ENCODE measurements at regions of chr4 and their contacts with region 1.

Region 1: DNA sequence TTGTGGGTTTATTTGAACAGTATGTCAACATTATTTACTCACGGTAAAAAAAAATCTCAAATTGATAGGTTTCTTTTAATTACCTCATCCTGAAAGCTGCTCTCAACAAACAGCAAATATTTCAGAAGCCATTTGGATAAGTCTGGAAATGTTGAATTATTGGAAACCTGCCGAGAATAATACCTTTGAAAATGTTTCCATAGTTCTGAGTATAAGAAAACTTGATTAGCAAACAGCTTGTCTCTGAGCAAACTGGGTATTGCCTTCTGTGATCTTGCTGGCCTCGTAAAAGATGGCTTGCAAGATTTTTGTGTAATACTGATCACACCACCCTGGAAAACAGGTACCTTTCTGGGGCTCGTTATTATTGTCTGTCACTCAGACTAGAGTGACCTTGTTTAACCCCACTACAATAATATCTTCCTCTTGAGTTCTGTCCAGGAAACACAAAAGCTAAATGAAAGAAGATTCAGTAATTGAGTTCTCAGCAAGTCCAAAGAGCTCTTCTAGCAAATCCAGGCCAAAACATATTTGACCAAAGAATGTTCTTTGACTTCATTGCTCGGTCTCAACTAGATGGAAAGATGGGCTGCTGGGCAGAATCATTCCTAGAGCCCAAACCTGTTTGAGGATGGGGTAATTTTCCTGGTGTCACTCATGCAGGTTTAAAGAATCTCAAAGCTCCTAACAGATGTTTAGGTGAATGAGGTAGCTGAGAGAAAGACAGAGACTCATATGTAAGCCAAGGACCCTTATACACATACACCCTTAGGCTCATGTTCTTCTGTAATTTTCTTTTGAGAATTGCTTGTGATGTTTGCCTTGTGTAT is 255.6 kb upstream of the JADE1 start:
- DNase-seq: no peak
- ATAC-seq: peak; percentile 18; the same call in 2 of the 3 replicates
- H3K4me3 ChIP-seq: peak overlapping the region; percentile 39; the same call in 1 of the 2 replicates
- H3K27ac ChIP-seq: peak overlapping the region; percentile 85; the same call in 2 of the 3 replicates
- H3K4me1 ChIP-seq: peaks cover 6 to 12% of the 10 kb centered on the region in 2 experiments; a peak in 3 of 5 replicates
- H3K27me3 ChIP-seq: no peaks in the 10 kb centered on the region
- CTCF ChIP-seq: no peak
- EP300 ChIP-seq: no peak
- POLR2A ChIP-seq: no peak
- RAD21 ChIP-seq: no peak

Region 2: DNA sequence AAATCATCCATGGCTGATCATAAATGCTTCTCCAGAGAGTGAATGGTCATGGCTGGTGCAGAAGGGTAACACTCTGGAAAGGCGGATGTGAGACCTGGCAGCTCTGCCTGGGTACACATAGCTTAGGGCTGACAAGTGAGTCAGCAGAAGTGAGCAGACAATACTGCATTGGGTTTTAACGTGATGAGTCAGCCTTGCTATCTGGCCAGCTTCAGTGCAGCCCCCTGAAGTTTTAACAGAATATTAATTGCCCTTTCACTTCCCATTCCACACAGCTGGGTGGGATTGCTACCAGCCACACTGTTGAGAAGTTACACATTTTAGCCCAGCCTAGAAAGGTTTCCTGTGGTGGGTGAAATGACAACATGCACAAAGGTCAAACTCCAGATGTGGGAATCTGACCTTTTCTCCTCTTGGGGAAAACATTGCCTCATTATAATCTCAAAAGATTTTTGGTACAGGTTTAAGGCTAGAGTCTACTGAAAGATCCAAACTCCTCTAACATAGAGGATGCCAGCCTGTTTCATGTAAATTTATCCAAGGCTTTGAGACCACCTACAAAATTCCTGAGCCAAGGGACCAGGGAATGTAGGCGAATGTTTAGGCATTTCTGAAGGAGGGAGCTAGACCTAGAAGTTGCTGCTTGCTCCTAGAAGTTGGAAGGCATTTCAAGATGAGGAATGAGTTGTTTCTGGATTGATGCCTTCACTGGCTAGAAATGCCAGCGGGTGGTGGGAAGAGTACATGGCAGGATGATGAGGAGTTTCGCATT is 36.0 kb before region 1 on chr4:
- CTCF ChIA-PET with region 1: no interaction called
- POLR2A ChIA-PET with region 1: interaction called, 17 read pairs
- in situ Hi-C with region 1: no loop called
- intact Hi-C with region 1: loop called (anchors 1 kb)
- DNase-seq: peak; percentile 69 to 89 (median 78)
- ATAC-seq: peak; percentile 92
- H3K4me3 ChIP-seq: no peak overlapping the region
- H3K27ac ChIP-seq: peak overlapping the region; percentile 95
- H3K4me1 ChIP-seq: peaks cover 6 to 65% of the 10 kb centered on the region in 2 experiments
- H3K27me3 ChIP-seq: no peaks in the 10 kb centered on the region
- CTCF ChIP-seq: no peak
- EP300 ChIP-seq: peak; percentile 81
- POLR2A ChIP-seq: no peak
- RAD21 ChIP-seq: no peak; a peak in 2 of 4 replicates

Region 3: DNA sequence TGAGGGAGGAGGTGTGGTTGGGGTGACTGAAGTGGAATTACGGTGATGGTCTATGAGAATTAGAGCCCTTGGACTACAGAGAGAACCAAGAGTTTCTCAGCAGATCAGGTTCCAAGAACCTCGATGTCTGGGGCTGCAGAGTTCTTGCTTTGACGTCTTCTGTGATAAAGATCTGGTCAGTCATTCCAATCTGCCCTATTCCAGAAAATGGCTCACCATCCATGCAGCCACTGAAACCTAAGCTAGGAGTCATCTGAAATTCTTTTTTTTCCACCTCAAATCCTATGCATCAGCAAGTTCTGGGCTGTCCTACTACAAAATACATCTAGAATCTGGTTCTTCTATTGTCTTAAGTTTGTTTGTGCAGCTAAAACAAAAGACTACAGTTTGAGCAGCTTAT is 11.9 kb before region 1 on chr4:
- CTCF ChIA-PET with region 1: no interaction called
- POLR2A ChIA-PET with region 1: interaction called, 22 read pairs
- in situ Hi-C with region 1: no loop called
- intact Hi-C with region 1: no loop called
- DNase-seq: no peak
- ATAC-seq: no peak
- H3K4me3 ChIP-seq: no peak overlapping the region
- H3K27ac ChIP-seq: no peak overlapping the region
- H3K4me1 ChIP-seq: peaks cover 0 to 6% of the 10 kb centered on the region in 2 experiments; a peak in 3 of 5 replicates
- H3K27me3 ChIP-seq: no peaks in the 10 kb centered on the region
- CTCF ChIP-seq: no peak
- EP300 ChIP-seq: no peak
- POLR2A ChIP-seq: no peak
- RAD21 ChIP-seq: no peak

Region 4: GRCh38 chr4:128565565-128566186 is 11.8 kb after region 1 on chr4:
- CTCF ChIA-PET with region 1: no interaction called
- POLR2A ChIA-PET with region 1: interaction called, 22 read pairs
- in situ Hi-C with region 1: no loop called
- intact Hi-C with region 1: no loop called
- DNase-seq: peak in 2 of 4 experiments; percentile 39 to 54
- ATAC-seq: peak; percentile 79
- H3K4me3 ChIP-seq: no peak overlapping the region
- H3K27ac ChIP-seq: no peak overlapping the region
- H3K4me1 ChIP-seq: peaks cover 6 to 25% of the 10 kb centered on the region in 2 experiments; a peak in 4 of 5 replicates
- H3K27me3 ChIP-seq: no peaks in the 10 kb centered on the region
- CTCF ChIP-seq: peak; percentile 57 to 71 (median 60)
- EP300 ChIP-seq: no peak
- POLR2A ChIP-seq: no peak
- RAD21 ChIP-seq: peak; percentile 34 to 64

Region 5: GRCh38 chr4:128600996-128601871 is 47.3 kb after region 1 on chr4:
- CTCF ChIA-PET with region 1: no interaction called
- POLR2A ChIA-PET with region 1: interaction called, 12 read pairs
- in situ Hi-C with region 1: no loop called
- intact Hi-C with region 1: no loop called
- DNase-seq: peak; percentile 53 to 88 (median 65)
- ATAC-seq: peak; percentile 94
- H3K4me3 ChIP-seq: no peak overlapping the region
- H3K27ac ChIP-seq: peak overlapping the region; percentile 58
- H3K4me1 ChIP-seq: peaks cover 13 to 59% of the 10 kb centered on the region in 2 experiments
- H3K27me3 ChIP-seq: no peaks in the 10 kb centered on the region
- CTCF ChIP-seq: no peak
- EP300 ChIP-seq: peak; percentile 86
- POLR2A ChIP-seq: no peak
- RAD21 ChIP-seq: no peak; a peak in 1 of 4 replicates